B cell (primary cell): ENCODE measurements at regions of chr10 and their contacts with region 1.

Region 1: GRCh38 chr10:26773633-26774032 is 76.1 kb downstream of the PDSS1 start:
- DNase-seq: no peak
- ATAC-seq: no peak
- H3K4me3 ChIP-seq: no peak overlapping the region
- H3K4me3 Mint-ChIP-seq: no peak overlapping the region
- H3K27ac ChIP-seq: peak overlapping the region in 1 of 2 donors; percentile 44
- H3K27ac Mint-ChIP-seq: no peak overlapping the region
- H3K4me1 ChIP-seq: peaks cover under 1 to 18% of the 10 kb centered on the region in 2 donors
- H3K4me1 Mint-ChIP-seq: peaks cover 57% of the 10 kb centered on the region
- H3K27me3 ChIP-seq: no peaks in the 10 kb centered on the region
- H3K27me3 Mint-ChIP-seq: no peaks in the 10 kb centered on the region
- CTCF ChIP-seq: no peak

Region 2: DNA sequence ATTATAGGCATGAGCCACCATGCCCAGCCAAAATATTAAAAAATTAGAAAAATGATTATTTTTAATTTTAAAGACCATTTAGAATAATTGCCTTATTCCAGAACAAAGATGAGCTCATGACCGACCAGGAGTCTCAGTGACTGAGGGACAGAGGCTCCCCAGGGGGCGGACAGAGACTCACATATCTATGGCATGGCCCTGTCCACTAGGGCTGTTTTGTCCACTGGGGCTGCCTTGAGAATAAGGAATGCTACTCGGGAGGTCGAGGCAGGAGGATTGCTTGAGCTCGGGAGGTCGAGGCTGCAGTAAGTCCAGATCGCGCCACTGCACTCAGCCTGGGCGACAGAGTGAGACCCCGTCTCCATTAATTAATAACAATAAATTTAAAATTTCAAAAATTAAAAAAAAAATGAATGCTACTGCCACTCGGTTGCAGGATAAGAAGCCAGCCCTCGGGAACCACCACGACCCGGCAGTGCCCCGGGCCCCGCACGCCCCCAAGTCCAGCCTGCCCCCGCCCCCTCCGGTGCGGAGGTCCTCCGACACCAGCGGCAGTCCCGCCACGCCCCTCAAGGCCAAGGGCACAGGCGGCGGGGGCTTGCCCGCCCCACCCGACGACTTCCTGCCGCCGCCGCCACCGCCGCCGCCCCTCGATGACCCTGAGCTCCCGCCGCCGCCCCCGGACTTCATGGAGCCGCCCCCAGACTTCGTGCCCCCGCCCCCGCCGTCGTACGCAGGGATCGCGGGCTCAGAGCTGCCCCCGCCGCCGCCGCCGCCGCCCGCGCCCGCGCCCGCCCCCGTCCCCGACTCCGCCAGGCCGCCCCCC is 206.9 kb before region 1 on chr10:
- CTCF ChIA-PET with region 1: no interaction called
- POLR2A ChIA-PET with region 1: no interaction called
- intact Hi-C with region 1: no loop called
- DNase-seq: no peak
- ATAC-seq: no peak
- H3K4me3 ChIP-seq: no peak overlapping the region
- H3K4me3 Mint-ChIP-seq: no peak overlapping the region
- H3K27ac ChIP-seq: no peak overlapping the region
- H3K27ac Mint-ChIP-seq: no peak overlapping the region
- H3K4me1 ChIP-seq: no peaks in the 10 kb centered on the region
- H3K4me1 Mint-ChIP-seq: no peaks in the 10 kb centered on the region
- H3K27me3 ChIP-seq: no peaks in the 10 kb centered on the region
- H3K27me3 Mint-ChIP-seq: no peaks in the 10 kb centered on the region
- CTCF ChIP-seq: no peak

Region 3: DNA sequence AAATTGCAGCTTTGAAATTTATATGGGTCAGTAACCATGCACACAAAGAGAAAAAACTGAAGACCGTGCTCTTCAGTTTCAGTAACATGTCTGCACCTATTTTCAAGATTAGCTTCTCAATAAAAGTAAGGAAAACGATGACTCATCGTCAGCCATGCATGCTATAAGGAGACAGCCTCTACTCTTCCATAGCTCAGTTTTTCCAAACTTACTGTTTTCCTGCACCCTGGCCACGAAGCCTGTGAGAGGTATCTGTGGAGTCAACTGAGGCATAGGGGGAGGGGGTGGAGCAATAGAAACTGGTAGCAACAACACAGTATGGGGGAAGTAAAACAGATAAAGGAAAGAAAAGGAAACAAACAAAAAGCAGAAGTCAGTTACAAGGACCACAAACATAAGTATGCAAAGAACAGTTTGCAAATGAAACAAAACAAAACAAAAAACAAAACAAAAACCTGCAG is 18.2 kb before region 1 on chr10:
- CTCF ChIA-PET with region 1: interaction called, 3 read pairs
- POLR2A ChIA-PET with region 1: no interaction called
- intact Hi-C with region 1: loop called (anchors 2 kb)
- DNase-seq: peak; percentile 69
- ATAC-seq: peak; percentile 74
- H3K4me3 ChIP-seq: peak overlapping the region in 1 of 5 experiments; percentile 30
- H3K4me3 Mint-ChIP-seq: peak overlapping the region; percentile 51
- H3K27ac ChIP-seq: peak overlapping the region; percentile 1 to 28
- H3K27ac Mint-ChIP-seq: peak overlapping the region; percentile 84
- H3K4me1 ChIP-seq: peaks cover 7 to 12% of the 10 kb centered on the region in 2 donors
- H3K4me1 Mint-ChIP-seq: peaks cover 20% of the 10 kb centered on the region
- H3K27me3 ChIP-seq: no peaks in the 10 kb centered on the region
- H3K27me3 Mint-ChIP-seq: no peaks in the 10 kb centered on the region
- CTCF ChIP-seq: no peak